Activated B cell treated with CpG ODN at 0.5 μM for 24 hours (primary cell): ENCODE measurements at regions of chr14 and their contacts with region 1.

Region 1: DNA sequence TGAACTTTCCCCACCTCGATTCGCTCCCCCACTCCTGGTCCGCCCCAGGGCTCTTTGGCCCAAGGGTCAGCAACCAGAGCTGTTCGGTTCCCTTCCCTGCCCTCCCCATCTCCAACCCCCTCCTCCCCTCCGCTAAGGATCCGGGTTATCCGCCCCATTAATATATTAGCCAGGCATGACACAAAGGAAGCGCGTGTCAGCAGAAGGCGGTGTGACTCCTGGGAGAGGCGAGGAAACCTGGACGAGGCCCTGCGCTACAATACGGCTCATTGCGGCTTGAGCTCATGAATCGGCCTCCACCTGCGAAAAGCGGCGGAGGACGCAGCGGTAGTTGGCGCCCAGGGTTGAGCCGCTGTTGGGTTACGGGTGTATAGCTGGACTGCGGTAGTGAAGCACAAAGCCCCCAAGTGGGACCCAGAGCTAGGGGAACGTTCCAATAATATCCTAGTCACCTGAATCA is 10.0 kb downstream of the FOXA1 start:
- DNase-seq: no peak
- ATAC-seq: no peak
- H3K4me3 Mint-ChIP-seq: no peak overlapping the region
- H3K27ac Mint-ChIP-seq: no peak overlapping the region
- H3K4me1 Mint-ChIP-seq: no peaks in the 10 kb centered on the region
- H3K27me3 Mint-ChIP-seq: peaks cover 43% of the 10 kb centered on the region
- CTCF ChIP-seq: no peak

Region 2: DNA sequence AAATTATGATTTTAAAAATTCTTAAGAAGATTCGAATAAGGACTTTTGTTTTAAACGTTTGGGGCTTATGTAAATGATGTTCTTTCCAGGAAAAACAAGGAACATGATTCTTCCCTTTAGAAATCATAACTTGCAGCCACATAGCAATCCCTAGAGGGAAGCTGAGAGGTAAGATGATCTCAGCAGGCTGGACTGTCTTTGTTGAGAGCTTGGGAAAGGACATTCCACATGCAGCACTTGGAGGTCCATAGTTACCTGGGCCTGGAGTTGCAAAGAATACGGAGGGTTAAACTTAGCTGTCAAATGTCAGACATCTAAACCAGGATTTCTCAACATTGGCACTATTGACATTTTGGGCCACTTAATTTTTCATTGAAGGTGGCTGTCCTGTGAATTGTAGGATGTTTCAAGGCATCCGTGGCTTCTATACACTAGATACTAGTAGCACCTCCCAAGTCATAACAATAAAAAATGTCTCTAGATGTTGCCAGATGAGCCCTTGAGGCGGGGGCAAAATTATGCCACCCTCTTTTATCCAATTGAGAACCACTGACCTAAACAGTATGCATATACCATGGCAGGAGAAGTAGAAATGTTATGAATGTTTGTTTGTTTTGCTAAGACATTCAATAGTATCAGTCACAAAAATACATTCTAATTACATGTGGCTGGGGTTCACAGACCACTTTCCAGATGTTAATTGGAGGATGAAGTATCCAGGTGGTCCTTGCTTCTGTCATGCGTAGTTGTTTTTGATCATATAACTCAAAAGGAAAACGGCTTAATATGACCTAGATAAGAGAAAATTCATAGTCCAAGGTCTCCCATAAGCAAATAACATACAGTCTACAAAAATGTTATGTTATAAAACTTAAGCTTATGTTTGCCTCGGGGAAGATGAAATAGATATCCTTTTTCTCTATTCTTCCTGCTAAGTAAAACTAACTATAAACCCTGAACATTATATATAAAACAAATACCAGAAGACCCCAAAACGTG is 40.8 kb after region 1 on chr14:
- CTCF ChIA-PET with region 1: no interaction called
- POLR2A ChIA-PET with region 1: interaction called, 11 read pairs
- intact Hi-C with region 1: no loop called
- DNase-seq: no peak
- ATAC-seq: no peak
- H3K4me3 Mint-ChIP-seq: no peak overlapping the region
- H3K27ac Mint-ChIP-seq: no peak overlapping the region
- H3K4me1 Mint-ChIP-seq: no peaks in the 10 kb centered on the region
- H3K27me3 Mint-ChIP-seq: peaks cover 9% of the 10 kb centered on the region
- CTCF ChIP-seq: no peak